ENCODE measurements at regions of chr3 and their contacts with region 1.

Region 1: DNA sequence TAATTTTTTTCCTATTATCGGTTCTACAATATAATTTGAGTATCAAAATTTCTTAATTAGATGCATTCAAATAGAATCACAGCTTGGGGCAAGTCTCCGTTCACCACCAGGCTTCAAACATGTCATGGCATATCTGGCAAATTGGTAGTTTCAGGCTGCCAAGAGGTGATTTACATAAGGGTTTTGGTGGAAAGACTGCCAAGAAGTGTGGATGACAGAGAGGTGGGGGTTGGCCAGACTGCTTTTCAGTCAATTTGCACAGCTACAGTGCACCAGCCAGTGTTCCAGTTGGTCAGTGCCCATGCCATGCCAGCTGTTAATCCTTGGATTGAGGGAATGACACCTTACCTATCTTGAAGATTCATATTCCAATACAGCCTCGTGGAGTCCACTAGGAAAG is 8.4 kb upstream of the GSK3B start:
- DNase-seq: peak; percentile 50
- H3K4me3 ChIP-seq: no peak overlapping the region
- H3K27ac ChIP-seq: no peak overlapping the region
- H3K4me1 ChIP-seq: no peaks in the 10 kb centered on the region
- H3K27me3 ChIP-seq: no peaks in the 10 kb centered on the region
- CTCF ChIP-seq: peak in 2 of 4 experiments; percentile 4 to 19
- POLR2A ChIP-seq: no peak

Region 2: GRCh38 chr3:120160050-120160449 is 57.4 kb after region 1 on chr3:
- intact Hi-C with region 1: loop called (anchors 10 kb)
- DNase-seq: peak; percentile 70
- H3K4me3 ChIP-seq: no peak overlapping the region
- H3K27ac ChIP-seq: no peak overlapping the region
- H3K4me1 ChIP-seq: no peaks in the 10 kb centered on the region
- H3K27me3 ChIP-seq: no peaks in the 10 kb centered on the region
- CTCF ChIP-seq: no peak
- POLR2A ChIP-seq: no peak